ENCODE measurements at regions of chr2 and their contacts with region 1.

Region 1: DNA sequence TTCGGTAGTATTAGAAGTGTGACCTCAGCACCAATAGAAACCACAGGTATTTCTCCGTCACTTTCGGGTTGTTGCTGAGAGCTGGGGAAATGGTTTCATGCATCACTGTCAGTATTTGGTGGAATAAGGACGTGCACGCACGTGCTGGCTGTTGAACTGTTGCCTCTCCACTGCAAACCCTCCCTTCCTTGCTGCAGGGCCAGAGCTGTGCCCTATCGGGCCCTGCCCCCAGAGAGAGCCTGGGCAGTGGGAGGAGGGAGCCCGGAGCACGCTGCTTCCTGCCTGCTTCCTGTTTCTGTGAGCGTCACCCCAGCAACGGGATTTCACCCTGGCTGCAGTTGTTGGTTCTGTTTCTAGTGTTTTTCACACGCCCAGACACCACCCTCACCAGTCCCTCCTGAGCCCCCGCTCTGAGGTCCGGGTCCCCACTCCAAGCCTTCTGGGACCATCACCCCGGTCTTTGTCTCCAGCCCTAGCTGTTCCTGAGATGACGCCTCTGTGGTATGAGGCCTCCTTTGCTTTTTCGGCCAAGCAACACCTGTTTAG is 47.4 kb downstream of the LRRFIP1 start:
- DNase-seq: peak; percentile 97
- ATAC-seq: peak; percentile 78
- H3K4me3 ChIP-seq: peak overlapping the region; percentile 38 to 72 (median 54)
- H3K4me3 Mint-ChIP-seq: peak overlapping the region; percentile 92
- H3K27ac ChIP-seq: peak overlapping the region; percentile 97 to 99
- H3K27ac Mint-ChIP-seq: peak overlapping the region; percentile 96
- H3K4me1 ChIP-seq: peaks cover 75 to 88% of the 10 kb centered on the region in 2 donors
- H3K4me1 Mint-ChIP-seq: peaks cover 84% of the 10 kb centered on the region
- H3K27me3 ChIP-seq: no peaks in the 10 kb centered on the region
- H3K27me3 Mint-ChIP-seq: no peaks in the 10 kb centered on the region
- CTCF ChIP-seq: no peak

Region 2: DNA sequence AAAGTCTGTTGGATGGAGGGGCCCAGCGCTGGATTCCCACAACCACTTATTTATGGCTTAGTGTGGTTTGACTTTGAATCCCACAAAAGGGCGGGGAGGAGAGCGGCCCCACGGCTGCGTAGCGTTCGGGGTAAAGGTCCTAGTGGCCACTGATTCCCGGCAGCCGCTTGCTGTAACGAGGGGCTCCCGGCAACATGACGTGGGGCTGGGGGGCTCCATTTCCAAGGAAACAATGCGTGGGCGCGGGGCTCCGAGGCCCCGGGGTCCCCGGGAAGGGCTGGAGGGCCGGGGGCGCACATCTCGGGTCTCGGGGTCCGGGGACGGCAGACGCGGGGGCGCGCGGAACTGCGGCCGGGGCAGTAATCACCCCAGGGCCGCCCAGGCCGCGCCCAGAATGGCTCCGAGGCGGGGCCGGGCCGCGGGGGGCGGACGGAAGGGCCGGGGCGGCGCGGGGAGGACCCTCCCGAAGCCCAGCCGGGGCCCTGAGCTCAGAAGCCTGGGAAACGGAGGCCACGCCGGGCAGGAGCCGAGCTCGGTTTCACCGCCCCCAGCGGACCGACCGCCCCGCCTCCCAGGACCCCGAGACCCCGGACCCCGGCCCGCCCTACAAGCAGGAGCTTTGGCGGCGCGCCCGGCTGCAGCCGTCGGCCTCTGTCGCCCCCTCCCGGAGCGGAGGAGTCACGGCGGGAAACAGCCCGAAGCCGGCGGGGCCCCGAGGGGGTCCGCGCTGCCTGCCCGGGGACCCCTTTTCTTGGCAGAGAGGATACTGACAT is 199.7 kb before region 1 on chr2:
- CTCF ChIA-PET with region 1: no interaction called
- POLR2A ChIA-PET with region 1: no interaction called
- intact Hi-C with region 1: loop called (anchors 1 kb)
- DNase-seq: peak; percentile 84
- ATAC-seq: peak; percentile 88
- H3K4me3 ChIP-seq: peak overlapping the region; percentile 12 to 91 (median 71)
- H3K4me3 Mint-ChIP-seq: peak overlapping the region; percentile 87
- H3K27ac ChIP-seq: peak overlapping the region; percentile 47 to 80
- H3K27ac Mint-ChIP-seq: peak overlapping the region; percentile 82
- H3K4me1 ChIP-seq: peaks cover 11 to 15% of the 10 kb centered on the region in 2 donors
- H3K4me1 Mint-ChIP-seq: peaks cover 11% of the 10 kb centered on the region
- H3K27me3 ChIP-seq: peaks cover 0 to 21% (median 15%) of the 10 kb centered on the region in 4 experiments
- H3K27me3 Mint-ChIP-seq: peaks cover 32% of the 10 kb centered on the region
- CTCF ChIP-seq: peak; percentile 92

Region 3: GRCh38 chr2:237581751-237582746 is 92.8 kb before region 1 on chr2:
- CTCF ChIA-PET with region 1: interaction called, 8 read pairs
- POLR2A ChIA-PET with region 1: no interaction called
- intact Hi-C with region 1: loop called (anchors 5 kb)
- DNase-seq: peak; percentile 61
- ATAC-seq: peak; percentile 68
- H3K4me3 ChIP-seq: no peak overlapping the region
- H3K4me3 Mint-ChIP-seq: no peak overlapping the region
- H3K27ac ChIP-seq: no peak overlapping the region
- H3K27ac Mint-ChIP-seq: no peak overlapping the region
- H3K4me1 ChIP-seq: peaks cover 0 to 4% of the 10 kb centered on the region in 2 donors
- H3K4me1 Mint-ChIP-seq: peaks cover 2% of the 10 kb centered on the region
- H3K27me3 ChIP-seq: peaks cover 0 to 7% (median 0%) of the 10 kb centered on the region in 4 experiments
- H3K27me3 Mint-ChIP-seq: peaks cover 2% of the 10 kb centered on the region
- CTCF ChIP-seq: peak; percentile 45

Region 4: DNA sequence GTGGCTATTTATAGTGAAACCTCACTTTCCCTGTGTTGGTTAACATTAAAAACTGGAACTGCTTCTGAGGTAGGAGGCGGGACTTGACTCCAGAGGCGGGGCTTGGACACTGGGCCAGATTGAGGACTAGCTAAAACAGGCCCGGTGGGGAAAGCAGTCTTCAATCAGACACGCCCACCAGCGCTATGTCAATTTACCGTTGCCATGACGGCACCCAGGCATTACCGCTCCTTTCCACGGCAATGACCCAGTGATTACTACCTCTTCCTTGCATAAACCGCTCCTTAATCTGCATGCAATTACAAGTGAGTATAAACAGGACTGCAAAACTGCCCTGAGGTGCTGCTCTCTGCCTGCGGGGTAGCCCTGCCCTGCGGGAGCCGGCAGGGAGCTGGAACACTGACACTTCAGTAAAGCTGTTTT is 12.1 kb before region 1 on chr2:
- CTCF ChIA-PET with region 1: interaction called, 11 read pairs
- POLR2A ChIA-PET with region 1: no interaction called
- intact Hi-C with region 1: loop called (anchors 2 kb)
- DNase-seq: peak; percentile 80
- ATAC-seq: peak; percentile 80
- H3K4me3 ChIP-seq: no peak overlapping the region
- H3K4me3 Mint-ChIP-seq: peak overlapping the region; percentile 40
- H3K27ac ChIP-seq: no peak overlapping the region
- H3K27ac Mint-ChIP-seq: peak overlapping the region; percentile 7
- H3K4me1 ChIP-seq: peaks cover 7 to 18% of the 10 kb centered on the region in 2 donors
- H3K4me1 Mint-ChIP-seq: peaks cover 16% of the 10 kb centered on the region
- H3K27me3 ChIP-seq: peaks cover 0 to 6% (median 2%) of the 10 kb centered on the region in 4 experiments
- H3K27me3 Mint-ChIP-seq: peaks cover 33% of the 10 kb centered on the region
- CTCF ChIP-seq: no peak

Region 5: DNA sequence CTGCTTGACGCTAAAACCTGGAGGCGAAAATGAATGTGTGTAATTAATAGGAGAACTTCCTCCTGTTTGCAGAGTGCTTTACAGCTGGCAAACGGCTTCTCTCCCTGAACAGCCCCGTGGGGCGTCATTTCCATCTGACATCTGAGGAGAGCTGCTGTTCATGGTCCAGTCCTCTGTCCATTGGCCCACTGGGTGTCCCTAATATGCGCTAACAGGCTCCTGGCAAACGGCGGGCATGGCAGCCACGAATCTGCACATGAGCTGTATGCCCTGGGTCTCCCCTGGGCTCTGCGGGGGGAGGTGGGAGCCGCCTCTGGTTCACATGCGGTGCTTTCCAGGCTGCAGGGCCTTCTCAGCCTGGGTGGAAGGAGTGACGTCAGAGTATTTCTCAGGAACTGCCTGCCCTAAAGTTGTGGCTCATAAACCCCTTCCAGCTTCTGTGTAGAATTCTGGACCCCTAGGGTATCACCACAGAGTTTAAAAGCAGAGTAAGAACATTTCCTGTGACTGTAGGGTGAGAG is 25.8 kb after region 1 on chr2:
- CTCF ChIA-PET with region 1: interaction called, 350 read pairs
- POLR2A ChIA-PET with region 1: interaction called, 19 read pairs
- intact Hi-C with region 1: no loop called
- DNase-seq: peak; percentile 81
- ATAC-seq: peak; percentile 55
- H3K4me3 ChIP-seq: peak overlapping the region in 2 of 5 experiments; percentile 5
- H3K4me3 Mint-ChIP-seq: peak overlapping the region; percentile 52
- H3K27ac ChIP-seq: peak overlapping the region; percentile 36 to 64
- H3K27ac Mint-ChIP-seq: peak overlapping the region; percentile 47
- H3K4me1 ChIP-seq: peaks cover 88 to 94% of the 10 kb centered on the region in 2 donors
- H3K4me1 Mint-ChIP-seq: peaks cover 93% of the 10 kb centered on the region
- H3K27me3 ChIP-seq: no peaks in the 10 kb centered on the region
- H3K27me3 Mint-ChIP-seq: no peaks in the 10 kb centered on the region
- CTCF ChIP-seq: no peak

Region 6: GRCh38 chr2:237723602-237724001 is 48.8 kb after region 1 on chr2:
- CTCF ChIA-PET with region 1: interaction called, 23 read pairs
- POLR2A ChIA-PET with region 1: interaction called, 4 read pairs
- intact Hi-C with region 1: no loop called
- DNase-seq: peak; percentile 46
- ATAC-seq: peak; percentile 69
- H3K4me3 ChIP-seq: no peak overlapping the region
- H3K4me3 Mint-ChIP-seq: no peak overlapping the region
- H3K27ac ChIP-seq: peak overlapping the region in 1 of 2 donors; percentile 8
- H3K27ac Mint-ChIP-seq: peak overlapping the region; percentile 63
- H3K4me1 ChIP-seq: peaks cover 7 to 14% of the 10 kb centered on the region in 2 donors
- H3K4me1 Mint-ChIP-seq: peaks cover 33% of the 10 kb centered on the region
- H3K27me3 ChIP-seq: no peaks in the 10 kb centered on the region
- H3K27me3 Mint-ChIP-seq: no peaks in the 10 kb centered on the region
- CTCF ChIP-seq: no peak

Region 7: DNA sequence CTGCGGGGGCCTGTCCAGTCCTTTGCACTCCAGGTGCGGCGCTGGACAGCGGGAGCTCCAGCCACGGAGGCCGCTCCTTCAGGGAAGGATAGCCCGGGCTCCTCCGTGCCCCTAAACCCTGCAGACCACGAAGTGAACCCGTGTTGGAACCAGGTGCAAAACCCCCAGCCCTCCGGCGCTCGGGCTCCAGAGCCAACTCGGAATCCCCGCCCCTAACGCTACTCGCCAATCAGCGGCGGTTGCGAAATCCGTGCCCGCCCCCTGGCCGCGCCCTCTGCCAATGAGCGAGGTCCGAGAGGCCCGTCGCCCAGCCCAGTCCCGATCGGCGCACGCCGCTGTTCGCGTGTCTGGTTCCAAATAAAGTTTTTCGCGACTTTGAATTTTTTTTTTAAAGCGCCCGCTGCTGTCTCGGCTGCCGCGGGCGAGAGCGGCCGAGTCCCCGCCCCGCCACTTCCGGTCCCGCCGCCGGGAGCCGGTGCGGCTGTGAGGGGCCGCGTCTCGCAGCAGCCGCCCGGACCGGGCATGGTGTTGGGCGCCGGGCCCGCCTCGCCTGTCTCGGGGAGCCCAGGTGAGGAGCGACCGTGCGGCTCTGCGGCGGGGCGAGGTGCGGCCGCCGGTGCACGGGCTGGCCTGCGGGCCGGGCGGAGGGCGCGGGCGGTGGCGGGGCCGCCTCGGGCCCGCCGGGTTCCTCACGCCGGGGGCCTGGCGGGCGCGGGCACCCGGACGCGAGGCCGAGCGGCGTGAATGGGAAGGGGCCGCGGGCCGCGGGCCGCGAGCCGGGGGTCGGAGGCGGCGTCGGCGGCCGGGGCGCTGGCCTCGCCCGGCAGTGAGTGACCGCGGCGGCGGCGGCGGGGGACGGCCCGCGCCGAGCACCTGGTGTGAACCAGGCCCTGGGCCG is 292.0 kb after region 1 on chr2 and contains the start of gene UBE2F:
- CTCF ChIA-PET with region 1: no interaction called
- POLR2A ChIA-PET with region 1: no interaction called
- intact Hi-C with region 1: loop called (anchors 10 kb)
- DNase-seq: peak; percentile 97
- ATAC-seq: peak; percentile 94
- H3K4me3 ChIP-seq: peak within 1 kb of the TSS; percentile 54 to 96 (median 73)
- H3K4me3 Mint-ChIP-seq: peak within 1 kb of the TSS; percentile 81
- H3K27ac ChIP-seq: peak within 1 kb of the TSS; percentile 45 to 50
- H3K27ac Mint-ChIP-seq: peak within 1 kb of the TSS; percentile 88
- H3K4me1 ChIP-seq: peaks cover 27 to 32% of the 10 kb centered on the region in 2 donors
- H3K4me1 Mint-ChIP-seq: peaks cover 36% of the 10 kb centered on the region
- H3K27me3 ChIP-seq: no peaks in the 10 kb centered on the region
- H3K27me3 Mint-ChIP-seq: no peaks in the 10 kb centered on the region
- CTCF ChIP-seq: no peak
- total RNA-seq, gene UBE2F: 56.6 and 57.6 TPM in 2 replicates